ENCODE measurements at regions of chr20 and their contacts with region 1.

Region 1: GRCh38 chr20:6008254-6008653 is 45.6 kb downstream of the LRRN4 start:
- DNase-seq: no peak
- ATAC-seq: no peak
- H3K4me3 ChIP-seq: no peak overlapping the region
- H3K4me3 Mint-ChIP-seq: peak overlapping the region in 2 of 3 donors; percentile 36 to 92
- H3K27ac ChIP-seq: no peak overlapping the region
- H3K27ac Mint-ChIP-seq: no peak overlapping the region
- H3K4me1 ChIP-seq: peaks cover 13 to 22% of the 10 kb centered on the region in 2 experiments
- H3K4me1 Mint-ChIP-seq: peaks cover 46 to 49% (median 47%) of the 10 kb centered on the region in 3 donors
- H3K27me3 ChIP-seq: no peaks in the 10 kb centered on the region
- H3K27me3 Mint-ChIP-seq: no peaks in the 10 kb centered on the region

Region 2: DNA sequence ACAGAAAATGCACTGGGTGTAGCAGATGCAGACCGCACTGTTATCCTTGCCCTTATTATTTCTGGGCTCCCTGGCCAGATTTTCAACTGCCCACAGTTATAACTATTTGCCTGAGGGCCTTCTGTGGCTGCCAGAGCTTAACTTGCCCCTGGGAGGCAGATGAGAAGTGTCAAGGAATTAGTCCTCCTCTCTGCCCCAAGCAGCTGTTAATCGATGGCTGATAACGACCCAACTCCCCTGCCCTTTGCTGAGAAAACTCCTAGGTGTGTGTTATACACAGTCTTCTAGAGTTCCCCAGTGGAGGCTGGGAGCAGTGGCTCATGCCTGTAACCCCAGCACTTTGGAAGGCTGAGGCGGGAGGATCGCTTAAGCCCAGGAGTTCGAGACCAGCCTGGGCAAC is 302.4 kb before region 1 on chr20:
- CTCF ChIA-PET with region 1: interaction called in 1 of 2 experiments, 11 read pairs
- POLR2A ChIA-PET with region 1: no interaction called
- DNase-seq: no peak
- ATAC-seq: no peak
- H3K4me3 ChIP-seq: no peak overlapping the region
- H3K4me3 Mint-ChIP-seq: no peak overlapping the region
- H3K27ac ChIP-seq: no peak overlapping the region
- H3K27ac Mint-ChIP-seq: no peak overlapping the region
- H3K4me1 ChIP-seq: no peaks in the 10 kb centered on the region
- H3K4me1 Mint-ChIP-seq: no peaks in the 10 kb centered on the region
- H3K27me3 ChIP-seq: no peaks in the 10 kb centered on the region
- H3K27me3 Mint-ChIP-seq: no peaks in the 10 kb centered on the region

Region 3: GRCh38 chr20:6058684-6059295 is 50.5 kb after region 1 on chr20:
- CTCF ChIA-PET with region 1: no interaction called
- POLR2A ChIA-PET with region 1: no interaction called
- DNase-seq: no peak
- ATAC-seq: no peak
- H3K4me3 ChIP-seq: no peak overlapping the region
- H3K4me3 Mint-ChIP-seq: no peak overlapping the region
- H3K27ac ChIP-seq: no peak overlapping the region
- H3K27ac Mint-ChIP-seq: peak overlapping the region in 1 of 2 donors; percentile 4
- H3K4me1 ChIP-seq: no peaks in the 10 kb centered on the region
- H3K4me1 Mint-ChIP-seq: peaks cover 4 to 6% (median 5%) of the 10 kb centered on the region in 3 donors
- H3K27me3 ChIP-seq: peaks cover 0 to 22% of the 10 kb centered on the region in 2 experiments
- H3K27me3 Mint-ChIP-seq: peaks cover 27 to 28% of the 10 kb centered on the region in 2 donors

Measured in T-cell (primary cell).